Activated CD8-positive, alpha-beta T cell treated with anti-CD3 and anti-CD28 coated beads, Interleukin-2, amount 10 ng/mL, durations not matched to agents 7 days and 5 days (primary cell): ENCODE measurements at regions of chr1 and their contacts with region 1.

Region 1: DNA sequence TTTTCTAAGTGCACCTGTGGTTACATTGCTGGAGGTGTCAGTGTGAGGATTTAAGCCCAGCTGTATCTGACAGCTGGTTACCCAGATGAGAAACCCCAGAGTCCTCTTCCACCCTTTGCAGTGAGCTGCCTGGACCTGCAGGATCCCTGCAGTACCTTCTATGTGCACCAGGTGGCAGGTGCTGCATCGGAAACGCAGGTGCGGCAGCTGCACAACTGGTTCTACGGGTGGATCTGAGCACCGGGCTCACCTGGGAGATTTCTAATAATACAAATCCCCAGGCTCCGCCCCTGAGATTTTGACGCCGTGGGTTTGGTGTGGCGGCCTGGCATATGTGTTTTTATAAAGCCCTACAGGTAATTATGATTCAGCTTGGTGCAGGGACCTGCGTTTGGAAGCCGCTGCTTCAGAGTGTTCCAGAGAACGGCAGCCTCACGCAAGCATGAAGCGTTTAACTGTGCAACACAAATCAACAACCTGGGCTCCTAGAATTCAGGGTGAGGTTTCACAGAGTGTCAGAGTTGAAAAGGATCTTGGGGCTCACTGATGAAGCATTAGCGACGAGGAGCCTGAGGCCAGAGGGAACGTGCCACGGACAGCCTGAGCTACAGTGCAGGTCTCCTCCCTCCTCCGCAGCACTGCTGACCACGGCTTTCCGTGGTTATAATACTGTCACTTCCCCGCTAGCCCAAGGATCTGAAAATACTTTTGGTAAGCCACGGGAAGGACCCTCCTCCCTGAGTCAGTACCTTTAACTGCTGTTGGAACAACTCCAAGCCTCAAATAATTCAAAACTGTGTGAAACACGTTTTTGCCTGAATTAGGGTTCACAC is 96.7 kb upstream of the TRABD2B start:
- DNase-seq: peak; percentile 79
- ATAC-seq: peak; percentile 97
- H3K4me3 Mint-ChIP-seq: peak overlapping the region; percentile 28
- H3K27ac Mint-ChIP-seq: no peak overlapping the region
- H3K4me1 Mint-ChIP-seq: peaks cover 6% of the 10 kb centered on the region
- H3K27me3 Mint-ChIP-seq: peaks cover 26% of the 10 kb centered on the region

Region 2: DNA sequence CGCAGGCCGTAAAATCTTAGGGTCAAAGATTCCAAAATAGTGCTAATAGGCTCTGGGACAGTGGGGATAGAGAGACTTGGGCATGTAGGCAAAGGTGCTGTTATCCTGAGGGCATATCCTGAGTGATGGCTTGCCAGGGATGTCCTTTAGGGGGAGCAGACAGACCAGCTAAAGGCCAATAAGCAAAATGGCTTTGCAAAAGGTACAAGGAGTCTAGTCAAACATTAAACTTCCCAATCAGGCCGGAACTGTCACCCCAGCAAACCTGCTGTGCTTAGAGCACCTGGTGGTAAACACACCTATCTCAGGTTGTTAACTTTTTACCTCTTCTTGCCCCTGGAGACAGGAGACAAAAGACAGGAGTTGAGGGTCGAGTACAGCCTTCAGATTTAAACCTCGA is 145.8 kb before region 1 on chr1:
- CTCF ChIA-PET with region 1: no interaction called
- POLR2A ChIA-PET with region 1: no interaction called
- DNase-seq: no peak
- ATAC-seq: no peak
- H3K4me3 Mint-ChIP-seq: no peak overlapping the region
- H3K27ac Mint-ChIP-seq: no peak overlapping the region
- H3K4me1 Mint-ChIP-seq: no peaks in the 10 kb centered on the region
- H3K27me3 Mint-ChIP-seq: peaks cover 8% of the 10 kb centered on the region

Region 3: DNA sequence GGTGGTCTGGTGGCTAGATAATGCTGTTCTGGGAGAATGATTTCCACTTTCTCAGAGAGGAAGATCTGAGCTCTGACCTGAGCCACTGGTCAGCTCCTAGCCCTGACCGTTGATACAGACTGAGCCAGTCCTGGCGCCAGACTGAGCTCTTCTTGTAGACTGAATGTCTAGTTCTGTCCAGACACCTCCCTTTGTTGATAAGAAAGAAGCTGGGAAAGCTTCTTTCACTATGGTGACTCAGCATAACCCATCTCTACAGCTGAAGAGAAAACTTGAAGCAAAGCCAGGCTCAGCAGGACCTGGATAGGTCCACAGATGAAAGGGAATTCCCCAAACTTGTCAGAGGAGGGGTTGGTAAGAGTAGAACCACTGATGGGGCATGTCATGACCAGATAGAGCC is 86.9 kb before region 1 on chr1:
- CTCF ChIA-PET with region 1: no interaction called
- POLR2A ChIA-PET with region 1: no interaction called
- DNase-seq: no peak
- ATAC-seq: no peak
- H3K4me3 Mint-ChIP-seq: no peak overlapping the region
- H3K27ac Mint-ChIP-seq: no peak overlapping the region
- H3K4me1 Mint-ChIP-seq: no peaks in the 10 kb centered on the region
- H3K27me3 Mint-ChIP-seq: peaks cover 9% of the 10 kb centered on the region

Region 4: DNA sequence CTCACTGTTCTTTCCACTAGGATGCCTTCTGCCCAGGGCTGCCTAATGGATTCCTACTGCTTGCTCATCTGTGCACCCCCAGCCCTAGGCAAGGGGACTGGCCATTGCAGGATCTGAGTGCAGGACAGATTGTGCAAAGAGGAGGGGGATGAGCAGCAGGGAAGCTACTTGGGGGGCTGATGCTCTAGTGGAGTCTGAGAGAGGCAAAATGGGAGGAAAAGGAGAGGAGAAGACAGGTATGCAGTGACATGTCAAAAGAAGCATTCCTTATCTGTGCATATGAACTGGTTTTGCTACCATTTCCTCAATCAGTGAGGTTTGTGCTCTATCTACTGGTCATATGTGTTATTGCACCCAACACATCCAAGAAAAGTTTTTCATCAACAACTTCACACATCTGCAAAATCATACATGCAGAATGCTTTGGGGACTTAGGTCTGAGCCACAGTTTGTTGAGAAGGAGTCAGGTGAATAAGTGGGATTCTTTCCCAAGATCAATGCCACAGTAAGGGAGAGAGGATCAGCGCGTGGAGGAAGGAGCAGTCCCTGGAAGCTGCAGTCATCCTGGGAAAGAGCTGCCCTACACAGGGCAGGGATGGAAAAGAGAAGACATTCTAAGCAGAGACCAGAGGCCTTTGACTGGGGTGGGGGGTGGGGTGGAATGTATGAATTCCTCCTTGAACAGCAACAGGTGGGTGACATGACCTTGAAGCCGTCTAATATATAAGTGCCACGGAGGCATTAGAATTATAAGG is 143.0 kb after region 1 on chr1:
- CTCF ChIA-PET with region 1: interaction called, 10 read pairs
- POLR2A ChIA-PET with region 1: no interaction called
- DNase-seq: no peak
- ATAC-seq: no peak
- H3K4me3 Mint-ChIP-seq: no peak overlapping the region
- H3K27ac Mint-ChIP-seq: no peak overlapping the region
- H3K4me1 Mint-ChIP-seq: no peaks in the 10 kb centered on the region
- H3K27me3 Mint-ChIP-seq: no peaks in the 10 kb centered on the region